CD14-positive monocyte (primary cell): ENCODE measurements at regions of chr21 and their contacts with region 1.

Region 1: DNA sequence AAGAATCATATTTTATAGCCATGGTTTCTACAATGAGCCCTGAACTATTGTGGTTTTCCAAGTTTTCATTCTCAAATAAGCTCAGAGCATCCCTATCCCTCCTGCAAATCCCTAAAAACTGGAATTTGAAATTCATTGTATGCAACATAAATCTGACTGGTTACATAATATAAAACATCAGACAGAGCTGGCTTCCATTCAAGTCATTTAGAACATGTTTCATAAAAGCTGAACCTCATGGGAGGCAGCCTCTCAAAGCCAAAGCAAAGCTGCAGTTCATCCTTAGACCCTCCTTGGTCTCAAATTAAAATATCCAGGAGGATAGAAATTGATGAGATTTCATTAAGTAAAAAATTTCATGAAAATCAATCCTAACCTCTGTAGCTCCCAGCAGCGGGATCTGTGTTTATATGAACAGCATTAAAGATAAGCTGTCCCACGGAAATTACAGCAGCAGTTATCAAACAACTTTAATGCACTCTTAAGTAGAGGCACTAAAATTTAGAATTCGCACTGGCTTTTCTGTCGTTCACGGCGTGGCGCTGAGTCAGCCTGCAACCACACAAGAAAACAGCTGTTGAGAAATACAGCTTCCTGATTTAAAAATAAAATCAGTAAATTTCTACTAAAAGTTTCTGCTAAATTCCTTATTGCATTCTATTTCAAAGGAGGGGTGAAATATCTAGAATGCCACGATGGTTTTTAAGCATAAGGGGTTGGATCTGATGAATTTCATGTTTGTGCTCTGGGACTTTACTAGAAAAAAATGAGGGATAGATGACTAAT is 99.9 kb upstream of the TIAM1 start:
- DNase-seq: peak; percentile 59 to 74 (median 66)
- H3K4me3 ChIP-seq: peak overlapping the region in 2 of 3 experiments; percentile 22 to 63
- H3K4me3 Mint-ChIP-seq: peak overlapping the region in 1 of 2 donors; percentile 68
- H3K27ac ChIP-seq: peak overlapping the region; percentile 61 to 91
- H3K27ac Mint-ChIP-seq: peak overlapping the region; percentile 82 to 96 (median 94)
- H3K4me1 ChIP-seq: peaks cover 68 to 70% of the 10 kb centered on the region in 2 donors
- H3K4me1 Mint-ChIP-seq: peaks cover 66% of the 10 kb centered on the region
- H3K27me3 ChIP-seq: no peaks in the 10 kb centered on the region
- H3K27me3 Mint-ChIP-seq: peaks cover 0 to 3% (median 0%) of the 10 kb centered on the region in 3 donors
- CTCF ChIP-seq: no peak

Region 2: DNA sequence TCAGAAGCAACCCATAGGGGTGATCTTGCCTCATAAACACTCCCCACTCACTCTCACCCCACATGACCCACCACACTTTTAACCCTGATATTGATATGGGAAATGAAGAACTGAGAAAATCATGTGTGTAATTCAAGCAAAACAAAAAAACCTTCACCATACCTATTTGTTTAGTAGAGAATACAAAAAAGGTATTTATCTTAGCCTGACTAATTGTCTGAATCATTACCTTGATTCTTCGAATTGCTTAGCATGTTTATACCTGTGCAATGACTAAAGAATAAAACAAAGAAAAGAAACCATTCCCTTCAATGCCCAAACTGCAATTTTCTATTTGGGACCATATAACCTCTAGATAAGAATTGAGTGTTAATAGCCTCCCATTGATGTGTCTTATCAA is 1279.1 kb before region 1 on chr21:
- intact Hi-C with region 1: no loop called
- DNase-seq: no peak
- H3K4me3 ChIP-seq: no peak overlapping the region
- H3K4me3 Mint-ChIP-seq: no peak overlapping the region
- H3K27ac ChIP-seq: no peak overlapping the region
- H3K27ac Mint-ChIP-seq: no peak overlapping the region
- H3K4me1 ChIP-seq: no peaks in the 10 kb centered on the region
- H3K4me1 Mint-ChIP-seq: no peaks in the 10 kb centered on the region
- H3K27me3 ChIP-seq: no peaks in the 10 kb centered on the region
- H3K27me3 Mint-ChIP-seq: no peaks in the 10 kb centered on the region
- CTCF ChIP-seq: no peak

Region 3: GRCh38 chr21:31343680-31344480 is 100.0 kb before region 1 on chr21 and contains the start of gene TIAM1:
- intact Hi-C with region 1: loop called (anchors 10 kb)
- DNase-seq: peak; percentile 70 to 75 (median 75)
- H3K4me3 ChIP-seq: peak within 1 kb of the TSS; percentile 79 to 92 (median 84)
- H3K4me3 Mint-ChIP-seq: peak within 1 kb of the TSS; percentile 99
- H3K27ac ChIP-seq: peak within 1 kb of the TSS; percentile 21 to 82
- H3K27ac Mint-ChIP-seq: peak within 1 kb of the TSS; percentile 84 to 96 (median 93)
- H3K4me1 ChIP-seq: peaks cover 50 to 60% of the 10 kb centered on the region in 2 donors
- H3K4me1 Mint-ChIP-seq: peaks cover 59% of the 10 kb centered on the region
- H3K27me3 ChIP-seq: peaks cover 0 to 25% of the 10 kb centered on the region in 2 donors
- H3K27me3 Mint-ChIP-seq: peaks cover 17 to 22% (median 18%) of the 10 kb centered on the region in 3 donors
- CTCF ChIP-seq: no peak
- polyA plus RNA-seq, gene TIAM1: 17.7 to 55.0 (median 45.3) TPM

Region 4: GRCh38 chr21:31410499-31411131 is 33.3 kb before region 1 on chr21:
- intact Hi-C with region 1: no loop called
- DNase-seq: no peak
- H3K4me3 ChIP-seq: peak overlapping the region in 1 of 3 experiments; percentile 2
- H3K4me3 Mint-ChIP-seq: no peak overlapping the region
- H3K27ac ChIP-seq: no peak overlapping the region
- H3K27ac Mint-ChIP-seq: no peak overlapping the region
- H3K4me1 ChIP-seq: peaks cover 4 to 9% of the 10 kb centered on the region in 2 donors
- H3K4me1 Mint-ChIP-seq: peaks cover 6% of the 10 kb centered on the region
- H3K27me3 ChIP-seq: no peaks in the 10 kb centered on the region
- H3K27me3 Mint-ChIP-seq: peaks cover 0 to 2% (median 0%) of the 10 kb centered on the region in 3 donors
- CTCF ChIP-seq: no peak

Region 5: GRCh38 chr21:31665397-31665796 is 221.5 kb after region 1 on chr21:
- intact Hi-C with region 1: no loop called
- DNase-seq: no peak
- H3K4me3 ChIP-seq: no peak overlapping the region
- H3K4me3 Mint-ChIP-seq: no peak overlapping the region
- H3K27ac ChIP-seq: no peak overlapping the region
- H3K27ac Mint-ChIP-seq: peak overlapping the region in 1 of 7 donors; percentile 35
- H3K4me1 ChIP-seq: peaks cover 7 to 20% of the 10 kb centered on the region in 2 donors
- H3K4me1 Mint-ChIP-seq: peaks cover 45% of the 10 kb centered on the region
- H3K27me3 ChIP-seq: no peaks in the 10 kb centered on the region
- H3K27me3 Mint-ChIP-seq: peaks cover 0 to 3% (median 0%) of the 10 kb centered on the region in 3 donors
- CTCF ChIP-seq: no peak